HepG2 (cell line): ENCODE measurements at regions of chrX and their contacts with region 1.

Region 1: GRCh38 chrX:47217642-47218279 is 720 bp upstream of the CDK16 start:
- DNase-seq: peak; percentile 94
- ATAC-seq: peak; percentile 86
- H3K4me3 ChIP-seq: peak overlapping the region; percentile 59 to 82 (median 81)
- H3K27ac ChIP-seq: peak overlapping the region; percentile 89
- H3K4me1 ChIP-seq: peaks cover 36% of the 10 kb centered on the region
- H3K27me3 ChIP-seq: no peaks in the 10 kb centered on the region
- CTCF ChIP-seq: no peak
- EP300 ChIP-seq: no peak
- POLR2A ChIP-seq: no peak
- RAD21 ChIP-seq: no peak

Region 2: GRCh38 chrX:47182106-47182700 is 35.6 kb before region 1 on chrX:
- CTCF ChIA-PET with region 1: no interaction called
- POLR2A ChIA-PET with region 1: no interaction called
- in situ Hi-C with region 1: no loop called
- intact Hi-C with region 1: no loop called
- DNase-seq: no peak
- ATAC-seq: no peak
- H3K4me3 ChIP-seq: no peak overlapping the region
- H3K27ac ChIP-seq: no peak overlapping the region
- H3K4me1 ChIP-seq: no peaks in the 10 kb centered on the region
- H3K27me3 ChIP-seq: no peaks in the 10 kb centered on the region
- CTCF ChIP-seq: no peak
- EP300 ChIP-seq: no peak
- POLR2A ChIP-seq: no peak
- RAD21 ChIP-seq: no peak

Region 3: GRCh38 chrX:47200385-47201150 is 17.2 kb before region 1 on chrX:
- CTCF ChIA-PET with region 1: no interaction called
- POLR2A ChIA-PET with region 1: interaction called, 13 read pairs
- in situ Hi-C with region 1: no loop called
- intact Hi-C with region 1: no loop called
- DNase-seq: peak; percentile 42
- ATAC-seq: peak; percentile 55
- H3K4me3 ChIP-seq: no peak overlapping the region
- H3K27ac ChIP-seq: peak overlapping the region; percentile 63
- H3K4me1 ChIP-seq: peaks cover 63% of the 10 kb centered on the region
- H3K27me3 ChIP-seq: no peaks in the 10 kb centered on the region
- CTCF ChIP-seq: peak; percentile 20
- EP300 ChIP-seq: peak in 1 of 2 experiments; percentile 18; a peak in 1 of 4 replicates
- POLR2A ChIP-seq: no peak
- RAD21 ChIP-seq: no peak

Region 4: DNA sequence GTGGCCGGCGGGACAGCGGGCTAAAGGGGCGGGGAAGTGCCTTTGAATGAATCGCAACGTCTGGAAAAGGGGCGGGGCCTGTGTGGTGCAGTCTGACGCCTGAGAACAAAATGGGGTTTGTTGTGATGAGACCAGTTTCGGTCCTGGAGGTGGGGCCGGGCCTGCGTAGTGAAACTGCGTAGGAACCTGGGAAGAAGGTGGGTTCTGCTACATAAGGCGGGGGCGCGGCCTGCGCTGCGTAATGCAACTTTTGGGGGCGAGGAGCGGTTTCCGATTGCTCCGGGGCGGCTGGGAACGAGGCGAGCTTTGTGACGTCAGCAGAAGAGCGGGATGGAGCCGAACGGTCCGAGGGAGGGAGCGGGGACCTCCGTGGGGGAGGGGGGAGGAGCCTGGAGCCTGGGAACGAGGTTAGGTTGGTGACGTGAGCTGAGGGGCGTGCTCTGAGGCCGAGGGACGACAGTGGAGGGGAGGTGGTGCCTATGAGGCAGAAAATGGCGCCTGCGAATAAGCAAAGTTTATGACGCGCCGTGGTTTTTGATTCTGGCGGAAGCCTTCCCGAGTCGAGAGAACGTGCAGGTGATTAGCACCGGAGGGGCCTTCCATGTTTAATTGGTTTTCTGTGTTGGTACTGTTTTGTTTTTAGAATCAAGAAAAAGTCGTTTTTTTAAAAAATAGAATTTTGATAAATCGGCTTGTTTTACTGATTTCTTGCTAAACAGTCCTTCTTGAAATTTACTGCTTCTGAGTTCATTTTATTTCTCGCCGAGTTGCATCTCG is 15.8 kb after region 1 on chrX:
- CTCF ChIA-PET with region 1: no interaction called
- POLR2A ChIA-PET with region 1: interaction called, 69 read pairs
- in situ Hi-C with region 1: no loop called
- intact Hi-C with region 1: no loop called
- DNase-seq: peak; percentile 89
- ATAC-seq: peak; percentile 87
- H3K4me3 ChIP-seq: peak overlapping the region; percentile 67 to 73 (median 69)
- H3K27ac ChIP-seq: peak overlapping the region; percentile 90
- H3K4me1 ChIP-seq: peaks cover 41% of the 10 kb centered on the region
- H3K27me3 ChIP-seq: no peaks in the 10 kb centered on the region; a peak in 1 of 5 replicates
- CTCF ChIP-seq: no peak
- EP300 ChIP-seq: 0 out of 4 replicates have a peak, but pooled peaks of 1 of the 2 experiments have one; percentile 7
- POLR2A ChIP-seq: peak; percentile 34 to 37; a peak in 1 of 4 replicates
- RAD21 ChIP-seq: no peak

Region 5: DNA sequence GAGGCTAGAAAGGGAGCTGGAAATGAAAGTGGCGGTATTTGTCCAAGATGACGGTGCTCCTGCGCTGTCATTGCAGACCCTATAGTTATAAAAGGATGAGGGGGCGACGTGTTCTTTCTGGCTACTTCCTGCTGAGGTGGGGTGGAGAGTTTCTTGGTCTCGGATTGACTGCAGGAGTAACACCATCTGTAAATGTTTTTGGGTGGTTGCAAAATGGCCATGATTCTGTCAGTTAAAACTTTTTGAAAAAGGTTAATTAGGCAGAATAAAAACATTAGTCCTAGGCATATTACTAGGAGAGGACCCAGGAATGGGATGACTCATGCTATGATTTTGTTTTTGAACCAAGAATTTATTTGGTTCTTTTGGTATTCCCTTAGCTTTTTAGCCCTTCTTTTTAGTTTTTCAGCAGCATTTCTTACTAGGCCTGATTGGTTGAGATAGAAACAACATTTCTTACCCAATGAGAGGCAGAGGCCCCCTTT is 68.1 kb after region 1 on chrX:
- CTCF ChIA-PET with region 1: no interaction called
- POLR2A ChIA-PET with region 1: no interaction called
- in situ Hi-C with region 1: no loop called
- intact Hi-C with region 1: loop called (anchors 2 kb)
- DNase-seq: no peak
- ATAC-seq: no peak
- H3K4me3 ChIP-seq: no peak overlapping the region
- H3K27ac ChIP-seq: no peak overlapping the region
- H3K4me1 ChIP-seq: no peaks in the 10 kb centered on the region
- H3K27me3 ChIP-seq: no peaks in the 10 kb centered on the region; a peak in 1 of 5 replicates
- CTCF ChIP-seq: no peak
- EP300 ChIP-seq: no peak
- POLR2A ChIP-seq: no peak
- RAD21 ChIP-seq: no peak